IMR-90 (cell line): ENCODE measurements at regions of chr16 and their contacts with region 1.

Region 1: GRCh38 chr16:53346-54236 is at the starts of genes POLR3K and SNRNP25:
- DNase-seq: peak; percentile 97
- ATAC-seq: peak; percentile 93
- H3K4me3 ChIP-seq: peak within 1 kb of the TSS; percentile 93
- H3K27ac ChIP-seq: peak within 1 kb of the TSS; percentile 79
- H3K4me1 ChIP-seq: peaks cover 2% of the 10 kb centered on the region; the same call in 1 of the 2 replicates
- H3K27me3 ChIP-seq: no peaks in the 10 kb centered on the region
- CTCF ChIP-seq: no peak
- POLR2A ChIP-seq: peak; percentile 54; the same call in 1 of the 2 replicates
- RAD21 ChIP-seq: no peak
- total RNA-seq, gene POLR3K: 9.0 and 10.6 TPM in 2 replicates
- total RNA-seq, gene SNRNP25: 63.3 and 88.0 TPM in 2 replicates

Region 2: GRCh38 chr16:71533-72341 is 18.1 kb after region 1 on chr16:
- CTCF ChIA-PET with region 1: interaction called, 3 read pairs
- POLR2A ChIA-PET with region 1: no interaction called
- dilution Hi-C with region 1: no loop called
- in situ Hi-C with region 1: no loop called
- intact Hi-C with region 1: loop called (anchors 2 kb)
- DNase-seq: peak; percentile 76
- ATAC-seq: peak; percentile 56
- H3K4me3 ChIP-seq: peak overlapping the region; percentile 72
- H3K27ac ChIP-seq: peak overlapping the region; percentile 87
- H3K4me1 ChIP-seq: peaks cover 60% of the 10 kb centered on the region
- H3K27me3 ChIP-seq: no peaks in the 10 kb centered on the region
- CTCF ChIP-seq: no peak
- POLR2A ChIP-seq: peak; percentile 85
- RAD21 ChIP-seq: no peak